BJ (cell line): ENCODE measurements at regions of chr22 and their contacts with region 1.

Region 1: GRCh38 chr22:36194971-36195370 is 6.6 kb downstream of the APOL4 start:
- DNase-seq: no peak
- H3K4me3 ChIP-seq: no peak overlapping the region
- H3K27me3 ChIP-seq: no peaks in the 10 kb centered on the region; the same call in 1 of the 2 replicates
- CTCF ChIP-seq: peak; percentile 83

Region 2: GRCh38 chr22:36144886-36145541 is 50.0 kb before region 1 on chr22:
- CTCF ChIA-PET with region 1: interaction called, 10 read pairs
- POLR2A ChIA-PET with region 1: no interaction called
- DNase-seq: no peak
- H3K4me3 ChIP-seq: no peak overlapping the region
- H3K27me3 ChIP-seq: peaks cover 3% of the 10 kb centered on the region
- CTCF ChIP-seq: peak; percentile 86

Region 3: DNA sequence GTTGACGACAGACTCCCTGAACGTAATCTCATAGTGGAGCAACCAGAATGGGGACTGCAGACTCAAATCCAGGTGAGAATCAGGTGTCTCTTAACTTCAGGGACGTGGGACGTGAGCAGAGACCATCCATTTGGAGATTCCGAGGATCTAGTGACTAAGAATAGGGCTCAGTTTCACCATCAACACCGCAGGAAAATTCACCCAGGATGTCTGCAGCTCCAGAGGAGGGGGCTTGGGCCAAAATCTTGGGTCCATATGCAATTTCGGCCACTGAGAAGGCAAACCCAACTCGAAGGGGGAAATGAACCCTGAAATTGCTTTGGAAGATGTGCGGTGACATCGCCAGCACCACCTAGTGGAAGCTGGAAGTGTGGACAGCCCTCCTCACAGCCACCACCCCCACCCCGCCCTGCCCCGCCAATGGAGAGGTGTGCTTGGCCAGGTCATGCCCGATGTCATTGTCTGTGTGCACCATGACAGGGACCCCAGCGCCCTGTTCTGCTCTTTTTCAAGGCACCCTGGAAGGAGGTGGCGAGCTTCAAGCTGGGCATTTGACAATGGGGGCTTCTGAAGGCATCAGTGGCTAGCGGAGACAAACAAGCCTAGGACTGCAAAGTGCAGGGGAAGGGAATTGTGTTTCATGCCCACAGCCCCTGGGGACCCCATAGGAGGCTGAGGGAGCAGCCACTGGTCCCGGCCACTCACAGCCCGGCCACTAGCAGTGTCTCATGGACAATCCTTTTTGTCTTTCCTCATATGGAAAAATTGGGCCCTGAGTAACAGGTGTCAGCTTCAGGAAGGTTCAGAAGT is 82.7 kb after region 1 on chr22:
- CTCF ChIA-PET with region 1: interaction called, 50 read pairs
- POLR2A ChIA-PET with region 1: no interaction called
- DNase-seq: no peak
- H3K4me3 ChIP-seq: no peak overlapping the region
- H3K27me3 ChIP-seq: no peaks in the 10 kb centered on the region
- CTCF ChIP-seq: peak; percentile 86

Region 4: GRCh38 chr22:36409911-36410756 is 215.2 kb after region 1 on chr22:
- CTCF ChIA-PET with region 1: no interaction called
- POLR2A ChIA-PET with region 1: no interaction called
- DNase-seq: no peak
- H3K4me3 ChIP-seq: peak overlapping the region; percentile 23; the same call in 1 of the 2 replicates
- H3K27me3 ChIP-seq: no peaks in the 10 kb centered on the region
- CTCF ChIP-seq: no peak

Region 5: DNA sequence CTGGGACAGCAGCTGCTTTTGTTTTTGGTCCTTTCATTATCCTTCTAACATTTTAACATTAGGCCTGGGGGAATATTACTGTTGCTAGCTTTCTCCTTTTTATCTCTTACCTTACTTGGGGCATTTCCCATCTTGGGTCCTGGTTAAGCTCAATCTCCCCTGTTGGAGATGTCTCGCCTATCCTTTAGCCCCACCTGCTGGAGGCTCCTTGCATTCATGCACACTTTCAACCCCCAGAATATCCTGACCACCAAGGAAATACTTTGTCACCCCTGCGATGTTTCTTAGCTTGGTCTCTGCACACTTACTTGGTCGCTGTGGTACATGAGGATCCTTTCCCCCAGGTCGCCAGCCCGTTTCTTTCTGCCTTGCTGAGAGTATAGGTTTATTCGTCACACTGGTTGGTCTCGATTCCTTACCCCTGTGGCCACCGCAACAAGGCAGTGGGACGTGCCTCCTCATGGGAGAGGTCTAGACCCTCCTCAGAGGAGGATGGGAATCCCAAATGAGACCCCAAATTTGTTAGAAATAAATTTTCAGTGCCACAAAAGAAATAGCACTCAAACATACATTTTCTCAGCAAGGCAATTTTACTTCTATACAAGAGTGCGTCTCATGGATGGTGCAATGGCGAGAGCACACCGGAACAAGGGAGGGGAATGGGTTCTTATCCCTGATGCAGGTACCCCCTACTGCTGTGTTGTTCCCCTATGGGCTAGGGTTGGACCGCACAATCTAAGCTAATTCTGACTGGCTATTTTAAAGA is 291.8 kb after region 1 on chr22:
- CTCF ChIA-PET with region 1: interaction called, 17 read pairs
- POLR2A ChIA-PET with region 1: no interaction called
- DNase-seq: no peak
- H3K4me3 ChIP-seq: no peak overlapping the region
- H3K27me3 ChIP-seq: no peaks in the 10 kb centered on the region
- CTCF ChIP-seq: peak; percentile 71